ENCODE measurements at regions of chr1 and their contacts with region 1.

Region 1: DNA sequence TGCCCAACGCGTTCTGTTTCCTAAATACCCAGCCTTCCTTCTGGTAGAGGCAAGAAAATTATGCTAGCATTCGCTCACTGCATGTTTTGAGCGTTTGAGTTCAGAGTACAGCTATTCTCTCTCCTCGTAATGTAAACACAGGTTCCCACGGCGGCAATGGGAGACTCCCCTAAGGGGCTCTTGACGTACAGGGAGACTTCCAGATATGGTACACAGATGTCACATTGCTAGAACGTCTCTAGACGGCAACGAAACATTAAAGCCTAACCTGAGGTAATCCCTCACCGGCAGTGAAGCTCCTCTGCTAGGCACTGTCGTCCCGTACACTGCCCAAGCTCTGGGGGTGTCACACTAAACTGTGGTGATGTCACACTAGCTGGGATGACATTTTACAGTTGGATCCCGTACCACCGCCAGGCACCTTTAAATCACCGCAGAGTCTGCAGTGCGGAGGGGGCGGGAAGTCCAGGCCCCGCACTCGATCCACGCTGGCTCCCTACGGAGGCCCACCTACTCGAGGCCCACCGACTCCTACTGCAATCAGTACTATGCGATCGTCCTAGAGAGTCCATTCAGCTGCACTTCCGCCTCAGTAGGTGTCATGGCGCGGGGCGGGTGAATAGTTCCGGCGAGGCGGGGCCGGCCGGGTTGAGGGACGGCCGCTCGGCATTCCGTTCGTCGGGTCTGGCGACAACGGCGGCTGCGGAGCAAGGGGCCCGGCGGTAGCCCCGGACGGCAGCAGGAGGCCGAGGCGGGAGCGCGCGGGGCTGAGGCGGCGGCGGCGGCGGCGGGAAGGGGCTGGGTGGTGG is at the start of gene HIPK1:
- DNase-seq: peak; percentile 92 to 94 (median 93)
- H3K4me3 ChIP-seq: peak within 1 kb of the TSS; percentile 79 to 98
- H3K4me3 Mint-ChIP-seq: peak within 1 kb of the TSS; percentile 96 to 99 (median 98)
- H3K27ac ChIP-seq: peak within 1 kb of the TSS; percentile 97
- H3K27ac Mint-ChIP-seq: peak within 1 kb of the TSS; percentile 97 to 100 (median 100)
- H3K4me1 ChIP-seq: peaks cover 42% of the 10 kb centered on the region
- H3K4me1 Mint-ChIP-seq: peaks cover 34 to 59% (median 47%) of the 10 kb centered on the region in 4 donors
- H3K27me3 ChIP-seq: no peaks in the 10 kb centered on the region
- H3K27me3 Mint-ChIP-seq: no peaks in the 10 kb centered on the region
- total RNA-seq, gene HIPK1: 107 to 110 TPM

Region 2: GRCh38 chr1:113783254-113784099 is 145.7 kb before region 1 on chr1:
- CTCF ChIA-PET with region 1: no interaction called
- POLR2A ChIA-PET with region 1: interaction called, 16 read pairs
- intact Hi-C with region 1: no loop called
- DNase-seq: peak; percentile 66 to 84 (median 73)
- H3K4me3 ChIP-seq: peak overlapping the region in 1 of 2 donors; percentile 14
- H3K4me3 Mint-ChIP-seq: peak overlapping the region in 7 of 8 donors; percentile 44 to 89 (median 72)
- H3K27ac ChIP-seq: peak overlapping the region; percentile 48
- H3K27ac Mint-ChIP-seq: peak overlapping the region in 2 of 7 donors; percentile 77 to 93
- H3K4me1 ChIP-seq: peaks cover 100% of the 10 kb centered on the region
- H3K4me1 Mint-ChIP-seq: peaks cover 30 to 47% (median 38%) of the 10 kb centered on the region in 4 donors
- H3K27me3 ChIP-seq: no peaks in the 10 kb centered on the region
- H3K27me3 Mint-ChIP-seq: no peaks in the 10 kb centered on the region

Region 3: DNA sequence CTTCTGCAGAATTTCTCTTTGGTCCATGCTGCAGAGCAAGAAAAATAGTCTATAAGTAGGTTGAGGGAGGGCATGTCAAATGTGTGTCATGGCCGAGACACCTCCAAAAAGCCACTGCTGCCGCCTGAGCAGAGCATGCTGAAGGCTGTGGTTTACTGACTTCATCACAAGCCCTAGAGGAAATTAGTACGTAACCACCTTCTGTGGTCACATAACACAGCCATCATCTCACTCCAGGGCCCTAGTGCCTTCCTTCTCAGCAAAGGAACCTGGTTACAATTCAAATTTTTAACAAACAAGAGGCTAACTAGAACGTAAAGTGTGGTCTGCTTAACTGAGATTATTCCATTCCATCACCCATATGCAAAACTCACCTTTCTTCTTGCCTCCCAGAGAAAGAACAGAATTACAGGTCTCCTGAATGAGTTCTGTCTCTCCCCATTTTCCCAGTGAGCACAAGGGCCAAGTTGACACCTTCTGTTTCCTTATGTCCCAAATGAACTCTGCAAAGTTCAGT is 57.5 kb before region 1 on chr1 and contains the start of gene PTPN22:
- CTCF ChIA-PET with region 1: interaction called, 10 read pairs
- POLR2A ChIA-PET with region 1: interaction called, 51 read pairs
- intact Hi-C with region 1: loop called (anchors 1 kb)
- DNase-seq: peak; percentile 85 to 95 (median 90)
- H3K4me3 ChIP-seq: peak within 1 kb of the TSS; percentile 48 to 71
- H3K4me3 Mint-ChIP-seq: peak within 1 kb of the TSS; percentile 85 to 95 (median 90)
- H3K27ac ChIP-seq: peak within 1 kb of the TSS; percentile 79
- H3K27ac Mint-ChIP-seq: peak within 1 kb of the TSS; percentile 96 to 99 (median 98)
- H3K4me1 ChIP-seq: peaks cover 74% of the 10 kb centered on the region
- H3K4me1 Mint-ChIP-seq: peaks cover 56 to 83% (median 66%) of the 10 kb centered on the region in 4 donors
- H3K27me3 ChIP-seq: no peaks in the 10 kb centered on the region
- H3K27me3 Mint-ChIP-seq: no peaks in the 10 kb centered on the region
- total RNA-seq, gene PTPN22: 32.2 to 33.7 TPM

Region 4: DNA sequence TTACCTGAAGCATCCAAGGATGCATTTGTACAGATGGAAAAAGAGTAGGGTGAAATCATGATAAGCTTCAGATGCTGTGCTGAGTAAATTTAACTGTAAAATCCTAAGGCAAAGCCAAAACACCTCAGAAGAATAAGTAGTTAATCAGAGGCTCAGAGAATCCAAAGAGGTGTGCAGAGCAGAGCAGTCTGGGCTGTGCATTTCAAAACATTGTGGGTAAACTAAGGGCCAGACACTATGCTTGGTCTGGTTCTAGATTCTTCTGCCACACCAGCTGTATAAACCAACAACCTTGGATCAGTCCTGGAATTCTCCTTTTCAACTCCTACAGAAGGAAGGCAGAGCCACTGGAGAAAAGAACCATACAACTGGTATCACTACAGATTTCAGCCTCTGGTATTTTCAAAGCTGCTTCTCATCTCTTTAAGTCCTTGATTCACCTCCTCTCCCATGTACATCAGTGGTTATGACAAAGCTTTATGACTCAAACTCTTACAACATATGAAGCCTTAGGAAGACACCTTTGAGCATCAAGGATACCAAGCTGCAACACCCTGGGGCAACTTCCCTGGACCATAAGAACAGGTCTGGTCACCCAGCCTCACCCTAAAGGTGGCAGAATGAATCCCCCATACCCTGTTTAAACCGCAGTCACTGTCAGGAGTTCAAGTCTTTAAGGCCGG is 11.6 kb before region 1 on chr1:
- CTCF ChIA-PET with region 1: interaction called, 5 read pairs
- POLR2A ChIA-PET with region 1: interaction called, 25 read pairs
- intact Hi-C with region 1: no loop called
- DNase-seq: no peak
- H3K4me3 ChIP-seq: no peak overlapping the region
- H3K4me3 Mint-ChIP-seq: no peak overlapping the region
- H3K27ac ChIP-seq: no peak overlapping the region
- H3K27ac Mint-ChIP-seq: no peak overlapping the region
- H3K4me1 ChIP-seq: no peaks in the 10 kb centered on the region
- H3K4me1 Mint-ChIP-seq: peaks cover 0 to 2% (median 0%) of the 10 kb centered on the region in 4 donors
- H3K27me3 ChIP-seq: no peaks in the 10 kb centered on the region
- H3K27me3 Mint-ChIP-seq: peaks cover 0 to 3% of the 10 kb centered on the region in 2 donors

Region 5: DNA sequence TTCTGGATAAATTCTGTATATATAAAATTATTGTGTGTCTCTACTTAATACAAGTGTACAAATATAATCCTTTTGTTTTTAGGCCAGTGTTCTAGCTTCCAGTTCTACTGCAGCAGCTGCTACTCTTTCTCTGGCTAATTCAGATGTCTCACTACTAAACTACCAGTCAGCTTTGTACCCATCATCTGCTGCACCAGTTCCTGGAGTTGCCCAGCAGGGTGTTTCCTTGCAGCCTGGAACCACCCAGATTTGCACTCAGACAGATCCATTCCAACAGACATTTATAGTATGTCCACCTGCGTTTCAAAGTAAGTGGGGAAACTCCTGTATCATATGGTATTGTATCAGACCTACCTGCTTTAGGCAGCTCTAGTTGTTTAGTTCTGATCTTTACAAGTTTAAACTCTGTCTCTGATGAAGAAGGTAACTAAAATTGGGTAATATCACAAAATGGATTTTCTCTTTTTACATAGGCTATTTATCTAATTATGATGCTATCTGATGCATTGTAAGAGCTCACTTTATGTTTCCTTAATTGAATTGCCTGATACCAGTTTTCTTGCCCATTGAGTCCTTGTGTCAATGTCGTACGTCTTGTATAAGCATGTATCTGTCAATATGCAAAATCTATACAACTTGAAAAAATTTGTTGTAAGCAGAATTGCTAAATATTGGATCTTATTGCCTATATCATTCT is 29.0 kb after region 1 on chr1:
- CTCF ChIA-PET with region 1: interaction called, 37 read pairs
- POLR2A ChIA-PET with region 1: interaction called, 51 read pairs
- intact Hi-C with region 1: no loop called
- DNase-seq: no peak
- H3K4me3 ChIP-seq: no peak overlapping the region
- H3K4me3 Mint-ChIP-seq: no peak overlapping the region
- H3K27ac ChIP-seq: no peak overlapping the region
- H3K27ac Mint-ChIP-seq: peak overlapping the region in 4 of 7 donors; percentile 10 to 41 (median 28)
- H3K4me1 ChIP-seq: peaks cover 10% of the 10 kb centered on the region
- H3K4me1 Mint-ChIP-seq: peaks cover 17 to 38% (median 20%) of the 10 kb centered on the region in 4 donors
- H3K27me3 ChIP-seq: no peaks in the 10 kb centered on the region
- H3K27me3 Mint-ChIP-seq: no peaks in the 10 kb centered on the region

Region 6: GRCh38 chr1:114581335-114582287 is 652.5 kb after region 1 on chr1 and contains the start of gene BCAS2:
- CTCF ChIA-PET with region 1: no interaction called
- POLR2A ChIA-PET with region 1: no interaction called
- intact Hi-C with region 1: loop called (anchors 2 kb)
- DNase-seq: peak; percentile 93 to 98 (median 97)
- H3K4me3 ChIP-seq: peak within 1 kb of the TSS; percentile 76 to 80
- H3K4me3 Mint-ChIP-seq: peak within 1 kb of the TSS; percentile 95 to 99 (median 96)
- H3K27ac ChIP-seq: peak within 1 kb of the TSS; percentile 90
- H3K27ac Mint-ChIP-seq: peak within 1 kb of the TSS; percentile 92 to 100 (median 99)
- H3K4me1 ChIP-seq: peaks cover 30% of the 10 kb centered on the region
- H3K4me1 Mint-ChIP-seq: peaks cover 14 to 42% (median 27%) of the 10 kb centered on the region in 4 donors
- H3K27me3 ChIP-seq: no peaks in the 10 kb centered on the region
- H3K27me3 Mint-ChIP-seq: peaks cover 0 to 1% of the 10 kb centered on the region in 2 donors
- total RNA-seq, gene BCAS2: 33.9 to 40.8 TPM